Caco-2 (cell line): ENCODE measurements at regions of chr19 and their contacts with region 1.

Region 1: DNA sequence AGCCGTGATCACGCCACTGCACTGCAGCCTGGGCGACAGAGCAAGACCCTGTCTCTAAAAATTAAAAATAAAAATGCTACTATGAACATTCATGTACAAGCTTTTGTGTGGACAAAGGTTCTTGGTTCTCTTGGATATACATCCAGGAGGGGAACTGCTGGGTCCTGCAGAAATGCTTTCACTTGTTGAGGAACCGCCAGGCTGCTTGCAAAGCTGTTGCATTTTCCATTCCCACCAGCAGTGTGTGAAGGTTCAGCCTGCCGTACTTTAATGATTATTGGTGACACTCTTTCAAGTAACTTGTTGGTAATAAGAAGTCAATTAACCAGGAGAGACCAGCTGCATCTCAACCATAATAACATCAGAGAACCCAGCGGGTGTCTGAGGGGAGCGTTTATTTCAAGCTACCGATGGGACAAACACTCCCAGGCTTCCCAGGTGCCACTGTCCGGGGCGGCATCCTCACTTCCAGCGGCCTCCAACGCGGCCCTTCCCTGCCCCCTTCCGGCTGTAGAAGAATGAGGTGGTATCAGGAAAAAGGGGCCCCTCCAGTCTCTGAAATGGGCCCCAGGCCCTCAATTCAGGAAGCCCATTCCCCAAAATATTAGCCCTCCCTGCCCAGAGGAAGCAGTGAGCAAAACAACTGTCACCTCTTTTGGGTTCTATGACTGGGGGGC is 15.2 kb upstream of the PPP1R12C start:
- DNase-seq: peak in 1 of 2 experiments; percentile 38
- H3K4me3 ChIP-seq: no peak overlapping the region
- H3K4me3 Mint-ChIP-seq: no peak overlapping the region
- H3K27ac Mint-ChIP-seq: no peak overlapping the region
- H3K4me1 ChIP-seq: 0 out of 2 replicates have a peak, but pooled peaks cover 3% of the 10 kb centered on the region
- H3K4me1 Mint-ChIP-seq: no peaks in the 10 kb centered on the region
- H3K27me3 ChIP-seq: no peaks in the 10 kb centered on the region
- H3K27me3 Mint-ChIP-seq: no peaks in the 10 kb centered on the region
- CTCF ChIP-seq: peak; percentile 38 to 41

Region 2: GRCh38 chr19:55088543-55089341 is 43.8 kb before region 1 on chr19:
- CTCF ChIA-PET with region 1: interaction called, 16 read pairs
- POLR2A ChIA-PET with region 1: no interaction called
- intact Hi-C with region 1: loop called (anchors 2 kb)
- DNase-seq: peak; percentile 86 to 92
- H3K4me3 ChIP-seq: no peak overlapping the region
- H3K4me3 Mint-ChIP-seq: peak overlapping the region; percentile 10
- H3K27ac Mint-ChIP-seq: peak overlapping the region; percentile 79
- H3K4me1 ChIP-seq: no peaks in the 10 kb centered on the region
- H3K4me1 Mint-ChIP-seq: peaks cover 9% of the 10 kb centered on the region
- H3K27me3 ChIP-seq: no peaks in the 10 kb centered on the region
- H3K27me3 Mint-ChIP-seq: no peaks in the 10 kb centered on the region
- CTCF ChIP-seq: peak; percentile 74 to 95

Region 3: GRCh38 chr19:55193481-55193880 is 60.9 kb after region 1 on chr19:
- CTCF ChIA-PET with region 1: no interaction called
- POLR2A ChIA-PET with region 1: interaction called, 10 read pairs
- intact Hi-C with region 1: no loop called
- DNase-seq: no peak
- H3K4me3 ChIP-seq: no peak overlapping the region
- H3K4me3 Mint-ChIP-seq: no peak overlapping the region
- H3K27ac Mint-ChIP-seq: no peak overlapping the region
- H3K4me1 ChIP-seq: no peaks in the 10 kb centered on the region
- H3K4me1 Mint-ChIP-seq: no peaks in the 10 kb centered on the region
- H3K27me3 ChIP-seq: no peaks in the 10 kb centered on the region
- H3K27me3 Mint-ChIP-seq: peaks cover 1% of the 10 kb centered on the region
- CTCF ChIP-seq: no peak